Mammary epithelial cell (primary cell): ENCODE measurements at regions of chr3 and their contacts with region 1.

Region 1: DNA sequence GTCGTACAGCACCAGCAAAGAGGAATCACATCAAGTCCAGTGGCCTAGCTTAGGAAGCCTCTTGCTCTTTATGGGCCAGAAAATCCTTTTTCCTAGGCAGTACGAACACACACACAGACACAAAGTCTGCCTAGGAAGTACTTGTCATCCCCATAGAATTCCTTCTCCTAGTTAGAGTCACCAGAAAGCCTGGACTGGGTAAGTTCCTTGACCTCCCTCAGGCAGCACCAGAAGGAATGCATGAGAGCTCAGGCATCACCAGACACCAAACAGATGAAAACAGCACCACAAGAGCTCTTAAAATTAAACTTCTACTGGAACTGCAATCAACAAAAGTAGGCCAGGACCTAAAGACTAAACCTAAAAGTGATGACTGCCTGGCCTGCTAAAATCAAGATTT is 192.9 kb upstream of the CCDC54 start:
- DNase-seq: no peak
- H3K4me3 ChIP-seq: no peak overlapping the region
- H3K27ac ChIP-seq: no peak overlapping the region
- H3K4me1 ChIP-seq: no peaks in the 10 kb centered on the region
- H3K27me3 ChIP-seq: no peaks in the 10 kb centered on the region
- CTCF ChIP-seq: no peak

Region 2: GRCh38 chr3:107172411-107172810 is 12.0 kb before region 1 on chr3:
- CTCF ChIA-PET with region 1: no interaction called
- dilution Hi-C with region 1: no loop called
- in situ Hi-C with region 1: no loop called
- intact Hi-C with region 1: loop called (anchors 1 kb)
- DNase-seq: no peak
- H3K4me3 ChIP-seq: no peak overlapping the region
- H3K27ac ChIP-seq: no peak overlapping the region
- H3K4me1 ChIP-seq: no peaks in the 10 kb centered on the region
- H3K27me3 ChIP-seq: no peaks in the 10 kb centered on the region
- CTCF ChIP-seq: no peak

Region 3: DNA sequence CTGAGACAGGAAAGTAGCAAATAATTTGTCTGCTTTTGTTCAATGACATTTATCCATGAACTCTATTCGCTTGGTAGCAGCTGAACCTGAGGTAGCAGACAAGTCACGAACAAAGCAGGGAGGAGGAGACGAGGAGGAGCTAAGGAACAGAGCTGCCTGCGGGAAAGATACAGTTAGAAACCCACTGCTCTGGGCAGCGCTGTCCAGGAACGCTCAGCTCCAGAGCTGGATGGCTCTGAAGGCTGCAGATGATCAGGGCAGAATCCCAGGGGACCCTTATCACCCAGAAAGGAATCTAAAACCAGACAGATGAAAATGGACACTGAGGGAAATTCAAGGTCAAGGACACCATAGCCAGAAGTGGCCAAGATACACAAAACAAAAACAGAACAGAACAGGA is 648.7 kb after region 1 on chr3:
- CTCF ChIA-PET with region 1: no interaction called
- dilution Hi-C with region 1: no loop called
- in situ Hi-C with region 1: no loop called
- intact Hi-C with region 1: no loop called
- DNase-seq: no peak
- H3K4me3 ChIP-seq: no peak overlapping the region
- H3K27ac ChIP-seq: no peak overlapping the region
- H3K4me1 ChIP-seq: no peaks in the 10 kb centered on the region
- H3K27me3 ChIP-seq: no peaks in the 10 kb centered on the region
- CTCF ChIP-seq: no peak